ENCODE measurements at regions of chr6 and their contacts with region 1.

Region 1: DNA sequence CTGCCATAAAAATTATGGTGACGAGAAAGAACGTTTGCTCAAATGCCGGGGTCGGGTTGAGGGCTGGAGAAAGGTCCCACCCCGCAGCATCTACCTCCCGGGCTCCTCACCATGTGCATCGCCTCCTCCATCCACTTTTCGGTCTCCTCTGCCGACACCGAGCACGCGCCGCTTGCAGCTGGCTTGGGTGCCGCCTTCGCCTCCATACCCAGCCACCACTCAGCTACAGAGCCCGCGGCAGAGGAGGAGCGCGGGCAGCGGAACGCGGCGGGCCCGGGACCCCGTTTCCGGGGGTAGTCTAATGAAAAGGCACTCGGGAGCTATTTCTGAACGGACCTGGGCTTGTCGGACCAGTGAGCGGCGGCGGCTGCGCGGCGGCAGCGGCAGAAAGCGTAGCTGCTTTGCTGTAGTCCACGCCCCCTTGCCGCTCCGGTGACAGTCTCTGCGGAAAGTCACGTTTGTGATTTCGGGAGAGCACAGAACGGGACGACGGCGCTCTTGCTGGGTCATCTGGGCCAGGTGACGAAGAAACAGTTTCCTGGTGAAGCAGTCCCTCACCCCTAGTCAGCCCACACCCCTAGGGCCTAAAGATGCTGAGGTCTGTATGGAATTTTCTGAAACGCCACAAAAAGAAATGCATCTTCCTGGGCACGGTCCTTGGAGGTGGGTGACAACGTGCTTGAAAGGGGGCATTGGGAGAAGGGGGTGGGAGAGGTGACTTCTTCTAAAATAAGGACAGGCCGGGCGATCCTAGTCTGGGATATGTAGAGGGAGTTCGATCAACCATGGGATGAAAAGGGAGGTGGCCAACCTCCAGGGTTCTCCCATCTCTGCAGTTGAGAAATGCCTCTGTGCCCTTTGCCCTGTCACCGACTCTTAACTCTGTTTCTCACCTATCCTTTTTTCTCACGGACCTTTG is at the starts of genes ADAT2 and PEX3:
- DNase-seq: peak; percentile 89 to 95
- ATAC-seq: peak; percentile 93 to 97 (median 96)
- H3K4me3 ChIP-seq: peak within 1 kb of the TSS; percentile 83
- H3K4me3 Mint-ChIP-seq: peak within 1 kb of the TSS; percentile 99
- H3K27ac ChIP-seq: peak within 1 kb of the TSS; percentile 73
- H3K27ac Mint-ChIP-seq: peak within 1 kb of the TSS; percentile 91 to 96
- H3K4me1 ChIP-seq: peaks cover 5% of the 10 kb centered on the region
- H3K4me1 Mint-ChIP-seq: peaks cover 32 to 42% of the 10 kb centered on the region in 2 donors
- H3K27me3 ChIP-seq: no peaks in the 10 kb centered on the region
- H3K27me3 Mint-ChIP-seq: no peaks in the 10 kb centered on the region
- CTCF ChIP-seq: no peak
- total RNA-seq, gene ADAT2: 17.4 to 19.4 (median 19.1) TPM
- total RNA-seq, gene PEX3: 10.2 to 16.0 (median 14.2) TPM

Region 2: GRCh38 chr6:142146828-142147662 is 1303.7 kb before region 1 on chr6 and contains the starts of genes NMBR and VTA1:
- intact Hi-C with region 1: loop called (anchors 2 kb)
- DNase-seq: peak; percentile 95 to 100
- ATAC-seq: peak; percentile 94 to 99 (median 95)
- H3K4me3 ChIP-seq: peak within 1 kb of the TSS; percentile 74
- H3K4me3 Mint-ChIP-seq: peak within 1 kb of the TSS; percentile 91
- H3K27ac ChIP-seq: peak within 1 kb of the TSS; percentile 64
- H3K27ac Mint-ChIP-seq: peak within 1 kb of the TSS; percentile 88 to 97
- H3K4me1 ChIP-seq: no peaks in the 10 kb centered on the region
- H3K4me1 Mint-ChIP-seq: peaks cover 50 to 55% of the 10 kb centered on the region in 2 donors
- H3K27me3 ChIP-seq: no peaks in the 10 kb centered on the region
- H3K27me3 Mint-ChIP-seq: peaks cover 9 to 16% of the 10 kb centered on the region in 2 donors
- CTCF ChIP-seq: peak; percentile 92
- total RNA-seq, gene NMBR: not detected
- total RNA-seq, gene VTA1: 20.5 to 33.3 (median 21.3) TPM

Region 3: GRCh38 chr6:143397229-143398222 is 53.2 kb before region 1 on chr6:
- intact Hi-C with region 1: loop called (anchors 1 kb)
- DNase-seq: peak; percentile 48 to 75
- ATAC-seq: peak; percentile 86 to 94 (median 87)
- H3K4me3 ChIP-seq: no peak overlapping the region
- H3K4me3 Mint-ChIP-seq: peak overlapping the region; percentile 49
- H3K27ac ChIP-seq: peak overlapping the region; percentile 30
- H3K27ac Mint-ChIP-seq: peak overlapping the region; percentile 63 to 64
- H3K4me1 ChIP-seq: peaks cover 37% of the 10 kb centered on the region
- H3K4me1 Mint-ChIP-seq: peaks cover 44 to 54% of the 10 kb centered on the region in 2 donors
- H3K27me3 ChIP-seq: no peaks in the 10 kb centered on the region
- H3K27me3 Mint-ChIP-seq: peaks cover 0 to 3% of the 10 kb centered on the region in 2 donors
- CTCF ChIP-seq: no peak

Region 4: DNA sequence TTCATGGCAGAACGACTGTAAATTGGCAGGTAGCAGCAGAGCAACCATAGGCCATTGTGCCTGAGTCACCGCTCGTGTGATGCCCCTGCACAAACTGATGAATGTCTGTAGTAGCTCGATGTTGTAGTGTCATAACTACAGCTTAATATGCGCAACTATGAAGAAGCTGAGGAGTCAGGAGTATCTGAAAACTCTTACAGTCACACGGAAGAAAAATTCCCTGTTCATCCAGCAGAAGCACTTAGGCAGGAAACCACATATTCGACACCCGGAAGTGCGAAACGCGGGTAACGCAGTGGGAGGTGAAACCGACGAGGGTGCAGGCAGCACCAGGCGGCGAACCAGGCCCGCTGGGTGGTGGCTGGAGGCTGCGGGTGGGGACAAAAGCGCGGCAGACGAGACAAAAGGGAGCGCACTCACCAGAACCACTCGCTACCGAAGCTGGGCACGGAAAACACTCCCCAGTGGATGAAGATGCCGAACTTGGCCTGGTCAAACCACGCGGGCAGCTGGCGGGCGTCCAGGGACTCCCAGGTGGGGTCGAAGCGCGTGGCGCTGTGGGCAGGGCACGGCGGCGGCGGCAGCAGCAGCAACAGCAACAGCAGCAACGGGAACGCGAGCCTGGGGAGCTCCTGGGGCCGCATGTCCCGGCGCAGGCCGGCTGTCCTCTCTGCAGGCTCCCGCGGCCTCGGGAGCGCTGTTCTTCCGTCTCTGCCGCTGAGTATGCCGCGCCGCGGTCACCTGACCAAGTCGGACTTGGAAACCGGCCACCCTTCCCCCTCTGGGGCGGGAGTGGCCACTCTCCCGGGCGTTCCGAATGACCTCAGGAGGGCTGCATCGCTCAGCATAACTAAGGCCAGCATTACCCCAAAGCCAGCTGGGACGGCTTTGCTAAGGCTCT is 60.5 kb after region 1 on chr6 and contains the start of gene FUCA2:
- intact Hi-C with region 1: loop called (anchors 1 kb)
- DNase-seq: peak; percentile 51 to 83
- ATAC-seq: peak; percentile 75 to 82 (median 80)
- H3K4me3 ChIP-seq: peak within 1 kb of the TSS; percentile 66
- H3K4me3 Mint-ChIP-seq: peak within 1 kb of the TSS; percentile 97
- H3K27ac ChIP-seq: peak within 1 kb of the TSS; percentile 45
- H3K27ac Mint-ChIP-seq: peak within 1 kb of the TSS; percentile 83 to 96
- H3K4me1 ChIP-seq: peaks cover 17% of the 10 kb centered on the region
- H3K4me1 Mint-ChIP-seq: peaks cover 14 to 34% of the 10 kb centered on the region in 2 donors
- H3K27me3 ChIP-seq: no peaks in the 10 kb centered on the region
- H3K27me3 Mint-ChIP-seq: peaks cover 0 to 5% of the 10 kb centered on the region in 2 donors
- CTCF ChIP-seq: no peak
- total RNA-seq, gene FUCA2: 10.5 to 15.5 (median 13.0) TPM

Region 5: DNA sequence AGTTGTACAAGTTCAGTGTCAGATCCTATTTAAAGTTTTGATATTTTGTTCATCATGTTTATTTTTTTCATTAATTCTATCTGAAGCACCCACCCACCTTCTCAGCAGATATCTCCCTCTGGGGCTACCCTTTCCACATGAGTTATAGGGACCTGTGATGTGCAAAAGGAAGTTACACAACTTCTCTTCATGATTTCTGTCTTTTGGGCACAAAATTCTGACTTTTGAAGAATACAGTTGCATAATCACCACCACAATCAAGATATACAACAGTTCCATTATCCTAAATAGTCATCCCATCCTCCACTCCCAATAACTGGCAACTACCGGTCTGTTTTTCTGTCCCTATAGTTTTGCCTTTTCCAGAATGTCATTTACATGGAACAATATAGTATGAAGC is 74.6 kb after region 1 on chr6:
- intact Hi-C with region 1: no loop called
- DNase-seq: no peak
- ATAC-seq: no peak
- H3K4me3 ChIP-seq: no peak overlapping the region
- H3K4me3 Mint-ChIP-seq: no peak overlapping the region
- H3K27ac ChIP-seq: no peak overlapping the region
- H3K27ac Mint-ChIP-seq: no peak overlapping the region
- H3K4me1 ChIP-seq: peaks cover 3% of the 10 kb centered on the region
- H3K4me1 Mint-ChIP-seq: peaks cover 8 to 9% of the 10 kb centered on the region in 2 donors
- H3K27me3 ChIP-seq: no peaks in the 10 kb centered on the region
- H3K27me3 Mint-ChIP-seq: no peaks in the 10 kb centered on the region
- CTCF ChIP-seq: no peak

Region 6: DNA sequence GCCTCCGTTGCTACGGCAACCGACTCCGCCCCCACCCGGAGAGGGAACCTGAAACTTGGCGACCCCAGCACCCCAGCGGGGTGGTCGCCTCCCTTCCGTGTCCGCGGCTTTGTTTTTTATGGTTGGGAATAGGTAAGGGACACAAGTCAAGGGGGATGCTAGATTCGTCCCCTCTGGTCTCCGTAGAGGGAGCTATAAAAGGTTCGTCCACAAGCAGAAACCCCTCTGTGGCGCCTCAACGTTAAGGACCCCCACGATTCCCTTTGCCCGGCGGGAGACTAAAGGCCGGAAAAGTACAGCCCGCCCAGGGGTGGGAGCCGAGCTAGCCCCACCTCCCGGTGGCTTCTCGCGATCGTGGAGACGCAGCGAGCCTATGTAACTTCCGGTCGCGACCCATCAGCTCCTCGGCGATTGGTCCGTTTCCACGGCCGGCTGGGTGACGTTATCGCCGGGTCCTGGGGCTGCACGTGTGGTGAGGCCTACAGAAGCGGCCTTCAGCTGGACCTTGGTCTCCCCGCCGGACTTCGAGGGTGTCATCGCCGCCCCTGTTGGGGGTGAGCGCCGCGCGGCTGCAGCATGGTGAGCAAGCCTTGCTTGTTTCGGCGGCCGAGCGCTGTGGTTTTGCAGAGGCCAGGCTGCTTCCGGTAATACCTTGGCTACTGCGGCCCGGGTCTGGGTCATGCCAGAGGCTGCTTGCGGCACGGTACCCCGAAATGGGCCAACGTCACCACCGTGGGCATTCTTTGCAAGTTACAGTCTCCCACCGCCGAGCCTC is 392.4 kb after region 1 on chr6 and contains the start of gene LTV1:
- intact Hi-C with region 1: loop called (anchors 5 kb)
- DNase-seq: peak; percentile 90 to 96
- ATAC-seq: peak; percentile 97 to 99 (median 98)
- H3K4me3 ChIP-seq: peak within 1 kb of the TSS; percentile 98
- H3K4me3 Mint-ChIP-seq: peak within 1 kb of the TSS; percentile 93
- H3K27ac ChIP-seq: peak within 1 kb of the TSS; percentile 94
- H3K27ac Mint-ChIP-seq: peak within 1 kb of the TSS; percentile 94
- H3K4me1 ChIP-seq: peaks cover 21% of the 10 kb centered on the region
- H3K4me1 Mint-ChIP-seq: peaks cover 17 to 18% of the 10 kb centered on the region in 2 donors
- H3K27me3 ChIP-seq: no peaks in the 10 kb centered on the region
- H3K27me3 Mint-ChIP-seq: peaks cover 0 to 5% of the 10 kb centered on the region in 2 donors
- CTCF ChIP-seq: no peak
- total RNA-seq, gene LTV1: 21.7 to 24.7 (median 21.7) TPM

Measured in natural killer cell (primary cell).